Activated T-helper 1 cell treated with anti-CD3 and anti-CD28 coated beads, Interleukin-12 subunit alpha, Interleukin-12 subunit beta, Interleukin-2, Interleukin-4 antibody, amounts not matched to agents 30 ng/mL and 10 ng/mL and 1 ng/mL, durations not matched to agents 14 hours and 24 hours and 36 hours (primary cell): ENCODE measurements at regions of chr16 and their contacts with region 1.

Region 1: GRCh38 chr16:2537453-2538379 is at the start of gene PDPK1:
- DNase-seq: peak; percentile 95
- H3K4me3 Mint-ChIP-seq: peak within 1 kb of the TSS; percentile 88
- H3K27ac Mint-ChIP-seq: peak within 1 kb of the TSS; percentile 88
- H3K4me1 Mint-ChIP-seq: peaks cover 37% of the 10 kb centered on the region
- H3K27me3 Mint-ChIP-seq: no peaks in the 10 kb centered on the region
- total RNA-seq, gene PDPK1: 50.8 and 60.2 TPM in 2 replicates

Region 2: GRCh38 chr16:2467521-2468151 is 70.1 kb before region 1 on chr16:
- intact Hi-C with region 1: no loop called
- DNase-seq: no peak
- H3K4me3 Mint-ChIP-seq: no peak overlapping the region
- H3K27ac Mint-ChIP-seq: no peak overlapping the region
- H3K4me1 Mint-ChIP-seq: no peaks in the 10 kb centered on the region
- H3K27me3 Mint-ChIP-seq: peaks cover 25% of the 10 kb centered on the region

Region 3: GRCh38 chr16:2513405-2514322 is 24.1 kb before region 1 on chr16 and contains the start of gene ATP6V0C:
- intact Hi-C with region 1: loop called (anchors 2 kb)
- DNase-seq: peak; percentile 88
- H3K4me3 Mint-ChIP-seq: peak within 1 kb of the TSS; percentile 91
- H3K27ac Mint-ChIP-seq: peak within 1 kb of the TSS; percentile 93
- H3K4me1 Mint-ChIP-seq: peaks cover 38% of the 10 kb centered on the region
- H3K27me3 Mint-ChIP-seq: peaks cover 6% of the 10 kb centered on the region
- total RNA-seq, gene ATP6V0C: 117 and 119 TPM in 2 replicates

Region 4: DNA sequence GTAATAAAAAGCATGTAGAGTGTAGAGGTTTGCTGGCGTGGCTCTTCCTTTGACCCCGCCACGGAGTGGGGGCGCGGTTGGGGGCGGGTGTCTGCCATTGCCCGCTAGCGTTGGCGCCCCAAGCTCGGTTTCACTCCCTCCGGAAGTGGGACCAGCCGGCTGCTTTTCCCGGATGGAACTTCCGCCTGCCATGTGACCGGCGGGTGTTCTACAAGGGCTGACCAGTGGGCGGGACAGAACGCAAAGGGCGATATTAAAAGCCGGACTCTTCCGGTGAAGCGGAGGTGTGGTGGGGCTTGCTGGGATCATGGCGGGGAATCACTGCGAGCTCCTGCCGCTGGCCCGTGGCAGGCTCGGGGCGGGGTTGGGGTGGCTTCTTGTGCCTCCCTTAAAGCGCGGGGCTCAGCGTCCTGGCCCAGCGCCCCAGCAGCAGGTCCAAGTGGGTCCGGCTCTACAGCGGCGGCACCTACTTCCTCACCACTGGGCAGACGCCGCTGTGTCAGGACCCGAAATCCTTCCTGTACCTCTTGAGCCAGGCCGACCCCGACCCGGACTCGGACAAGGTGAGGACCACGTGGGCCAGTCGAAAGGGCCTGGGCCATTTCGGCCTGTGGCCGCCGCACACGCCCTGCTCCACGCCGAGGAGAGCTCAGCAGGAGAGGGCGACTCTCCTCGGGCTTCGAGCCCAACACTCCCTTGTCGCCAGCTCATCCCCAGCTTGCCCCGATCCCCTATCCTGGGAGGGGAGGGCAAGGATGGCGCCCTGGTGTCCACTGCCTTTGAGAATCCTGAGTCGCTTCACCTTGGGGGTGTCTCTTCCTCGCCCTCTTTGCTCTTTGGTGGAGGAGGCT is 65.7 kb after region 1 on chr16:
- intact Hi-C with region 1: loop called (anchors 2 kb)
- DNase-seq: peak; percentile 77
- H3K4me3 Mint-ChIP-seq: peak overlapping the region; percentile 96
- H3K27ac Mint-ChIP-seq: peak overlapping the region; percentile 91
- H3K4me1 Mint-ChIP-seq: peaks cover 25% of the 10 kb centered on the region
- H3K27me3 Mint-ChIP-seq: no peaks in the 10 kb centered on the region

Region 5: DNA sequence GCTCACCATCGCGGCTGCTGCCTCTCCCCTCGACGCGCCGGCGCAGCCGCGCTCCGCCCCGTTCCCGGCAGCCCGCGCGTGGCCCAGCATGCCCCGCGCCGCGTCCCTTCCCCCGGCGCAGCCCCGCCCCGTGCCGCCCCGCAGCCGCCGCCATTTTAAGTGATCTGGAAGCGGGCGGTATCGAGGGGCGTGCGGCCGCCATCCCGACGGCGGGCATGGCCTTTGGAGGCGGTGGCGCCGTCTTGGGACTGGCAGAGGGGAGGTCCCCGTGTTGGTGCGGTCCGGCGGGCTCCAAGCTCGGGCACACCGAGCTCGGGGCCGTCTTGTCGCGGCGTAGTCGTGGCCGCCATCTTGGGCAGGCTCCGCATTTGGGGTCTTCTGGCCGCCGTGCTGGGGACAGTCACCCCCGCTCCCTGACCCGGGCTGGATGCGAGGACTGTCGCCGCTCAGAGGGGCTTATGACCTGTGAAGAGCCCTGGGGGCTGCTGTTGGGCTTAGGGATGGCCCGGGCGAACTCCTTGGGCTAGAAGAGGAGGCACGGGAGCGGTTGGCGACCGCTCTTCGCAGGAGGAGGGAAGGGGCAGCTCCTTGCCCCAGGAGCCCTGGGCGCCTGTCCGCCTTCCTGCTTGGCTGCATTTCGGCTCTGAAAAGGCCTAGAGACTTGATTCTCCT is 239.7 kb after region 1 on chr16 and contains the start of gene ELOB:
- intact Hi-C with region 1: no loop called
- DNase-seq: peak; percentile 87
- H3K4me3 Mint-ChIP-seq: peak within 1 kb of the TSS; percentile 93
- H3K27ac Mint-ChIP-seq: peak within 1 kb of the TSS; percentile 94
- H3K4me1 Mint-ChIP-seq: peaks cover 27% of the 10 kb centered on the region
- H3K27me3 Mint-ChIP-seq: no peaks in the 10 kb centered on the region
- total RNA-seq, gene ELOB: 256 and 277 TPM in 2 replicates

Region 6: DNA sequence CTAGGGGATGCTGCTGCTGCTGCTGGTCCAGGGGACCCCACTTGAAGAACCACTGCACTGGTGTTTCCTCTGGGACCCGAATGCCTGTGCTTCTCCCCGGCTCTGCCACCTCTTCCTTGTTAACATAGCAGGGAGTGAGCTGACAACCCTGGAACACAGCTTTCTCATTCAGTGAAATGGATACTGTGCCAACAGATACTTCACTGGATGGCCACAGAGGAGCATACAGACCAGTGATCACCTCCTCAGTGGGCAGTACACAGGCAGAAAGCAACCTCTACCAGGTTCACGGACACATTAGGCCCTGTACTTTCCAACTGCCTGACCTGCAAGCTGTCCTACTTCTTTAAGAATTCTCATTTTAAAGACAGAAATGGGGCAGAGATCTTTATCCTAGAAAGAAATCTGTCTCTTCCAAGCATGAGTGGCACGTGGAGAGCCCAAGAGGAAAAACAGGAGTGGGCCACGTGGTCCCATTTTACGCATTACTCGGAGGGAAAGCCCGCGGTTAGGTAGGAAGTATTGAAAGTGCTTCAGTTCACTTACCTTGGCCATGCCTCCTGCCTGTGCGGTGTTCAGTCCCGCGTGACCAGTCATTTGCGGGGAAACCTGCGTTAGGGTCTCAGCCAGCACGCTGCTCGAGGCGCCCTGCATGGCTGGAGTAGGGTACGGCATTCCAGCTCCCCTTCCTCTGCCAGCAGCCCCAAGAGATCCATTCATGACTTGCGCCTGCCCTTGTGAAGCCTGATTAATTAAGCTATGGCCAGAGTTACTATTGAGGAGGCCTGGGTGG is 1312.2 kb after region 1 on chr16:
- intact Hi-C with region 1: no loop called
- DNase-seq: no peak
- H3K4me3 Mint-ChIP-seq: no peak overlapping the region
- H3K27ac Mint-ChIP-seq: no peak overlapping the region
- H3K4me1 Mint-ChIP-seq: peaks cover 17% of the 10 kb centered on the region
- H3K27me3 Mint-ChIP-seq: no peaks in the 10 kb centered on the region